Psoas muscle (tissue), 8 donors: ENCODE measurements at regions of chr1 and their contacts with region 1.

Region 1: GRCh38 chr1:182955596-182956588 is 2.9 kb upstream of the SHCBP1L start:
- DNase-seq: no peak
- ATAC-seq: peak; percentile 27 to 59 (median 51)
- H3K4me3 ChIP-seq: no peak overlapping the region
- H3K27ac ChIP-seq: no peak overlapping the region
- H3K4me1 ChIP-seq: no peaks in the 10 kb centered on the region
- H3K27me3 ChIP-seq: peaks cover 0 to 13% (median 3%) of the 10 kb centered on the region in 3 donors
- CTCF ChIP-seq: no peak

Region 2: GRCh38 chr1:183129921-183130690 is 174.2 kb after region 1 on chr1:
- intact Hi-C with region 1: loop called in 1 of 2 experiments (anchors 5 kb)
- DNase-seq: peak; percentile 60 to 78
- ATAC-seq: peak in 3 of 4 donors; percentile 69 to 76 (median 73)
- H3K4me3 ChIP-seq: no peak overlapping the region
- H3K27ac ChIP-seq: peak overlapping the region; percentile 17
- H3K4me1 ChIP-seq: no peaks in the 10 kb centered on the region
- H3K27me3 ChIP-seq: no peaks in the 10 kb centered on the region
- CTCF ChIP-seq: no peak